ENCODE measurements at regions of chr3 and their contacts with region 1.

Region 1: GRCh38 chr3:100068826-100069225 is 45.5 kb downstream of the FILIP1L start:
- DNase-seq: peak; percentile 44
- H3K4me3 ChIP-seq: no peak overlapping the region
- H3K27ac ChIP-seq: no peak overlapping the region
- H3K4me1 ChIP-seq: no peaks in the 10 kb centered on the region
- H3K27me3 ChIP-seq: no peaks in the 10 kb centered on the region
- CTCF ChIP-seq: peak; percentile 63 to 77

Region 2: GRCh38 chr3:100150473-100150872 is 81.6 kb after region 1 on chr3:
- CTCF ChIA-PET with region 1: no interaction called
- dilution Hi-C with region 1: no loop called
- in situ Hi-C with region 1: no loop called
- intact Hi-C with region 1: no loop called
- DNase-seq: no peak
- H3K4me3 ChIP-seq: no peak overlapping the region
- H3K27ac ChIP-seq: no peak overlapping the region
- H3K4me1 ChIP-seq: no peaks in the 10 kb centered on the region
- H3K27me3 ChIP-seq: no peaks in the 10 kb centered on the region
- CTCF ChIP-seq: no peak

Region 3: GRCh38 chr3:100254168-100254777 is 185.4 kb after region 1 on chr3:
- CTCF ChIA-PET with region 1: interaction called, 4 read pairs
- dilution Hi-C with region 1: no loop called
- in situ Hi-C with region 1: loop called in 1 of 2 experiments (anchors 10 kb)
- intact Hi-C with region 1: loop called (anchors 1 kb)
- DNase-seq: peak; percentile 26
- H3K4me3 ChIP-seq: no peak overlapping the region
- H3K27ac ChIP-seq: no peak overlapping the region
- H3K4me1 ChIP-seq: no peaks in the 10 kb centered on the region
- H3K27me3 ChIP-seq: no peaks in the 10 kb centered on the region
- CTCF ChIP-seq: peak; percentile 55 to 77

Region 4: DNA sequence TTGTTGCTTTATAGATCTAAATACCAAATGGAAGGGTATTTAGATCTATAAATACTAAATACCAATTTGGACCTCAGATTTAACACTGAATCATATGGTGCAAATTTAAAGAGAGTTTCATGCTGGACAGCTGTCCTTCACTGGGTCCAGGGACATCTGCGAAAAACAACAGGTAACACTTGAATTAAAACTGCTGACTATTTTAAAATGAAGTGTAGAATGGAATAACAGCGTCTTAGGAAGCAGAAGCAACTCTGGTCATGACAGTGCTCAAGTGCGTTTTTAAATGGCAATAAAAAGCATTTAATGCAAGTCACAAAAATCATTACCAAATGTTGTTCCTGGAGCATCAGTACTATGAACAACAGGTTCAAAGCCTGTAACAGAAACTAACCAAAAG is 746.8 kb after region 1 on chr3:
- CTCF ChIA-PET with region 1: no interaction called
- dilution Hi-C with region 1: no loop called
- in situ Hi-C with region 1: no loop called
- intact Hi-C with region 1: no loop called
- DNase-seq: no peak
- H3K4me3 ChIP-seq: no peak overlapping the region
- H3K27ac ChIP-seq: no peak overlapping the region
- H3K4me1 ChIP-seq: no peaks in the 10 kb centered on the region
- H3K27me3 ChIP-seq: no peaks in the 10 kb centered on the region
- CTCF ChIP-seq: no peak